ENCODE measurements at regions of chr22 and their contacts with region 1.

Region 1: GRCh38 chr22:29205594-29206371 is at the start of gene EMID1:
- DNase-seq: no peak
- H3K4me3 ChIP-seq: peak within 1 kb of the TSS; percentile 47
- CTCF ChIP-seq: peak; percentile 26

Region 2: DNA sequence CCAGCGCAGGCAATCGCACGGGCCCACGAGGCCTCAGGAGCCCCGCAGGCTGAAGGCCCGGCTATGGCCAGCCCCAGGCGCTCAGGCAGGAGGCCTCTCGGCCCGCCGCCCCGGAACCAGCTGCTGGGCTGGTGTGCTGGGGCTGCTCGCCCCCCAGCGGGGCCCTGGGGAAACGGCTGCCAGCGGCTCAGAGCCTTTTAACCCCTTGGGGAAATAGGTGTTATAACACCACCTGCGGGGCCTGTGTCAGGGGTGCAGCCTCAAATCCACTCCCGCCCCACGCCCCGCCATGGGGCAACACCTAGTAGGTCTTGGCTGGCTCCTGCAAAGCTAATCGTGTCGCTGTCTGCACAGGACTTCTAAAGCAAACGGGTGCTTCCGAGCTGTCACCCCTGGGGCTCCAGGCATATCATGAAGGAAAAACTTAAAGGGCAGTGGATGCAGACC is 763.5 kb before region 1 on chr22:
- in situ Hi-C with region 1: no loop called
- DNase-seq: peak; percentile 37
- H3K4me3 ChIP-seq: peak overlapping the region; percentile 52
- CTCF ChIP-seq: peak; percentile 72

Region 3: DNA sequence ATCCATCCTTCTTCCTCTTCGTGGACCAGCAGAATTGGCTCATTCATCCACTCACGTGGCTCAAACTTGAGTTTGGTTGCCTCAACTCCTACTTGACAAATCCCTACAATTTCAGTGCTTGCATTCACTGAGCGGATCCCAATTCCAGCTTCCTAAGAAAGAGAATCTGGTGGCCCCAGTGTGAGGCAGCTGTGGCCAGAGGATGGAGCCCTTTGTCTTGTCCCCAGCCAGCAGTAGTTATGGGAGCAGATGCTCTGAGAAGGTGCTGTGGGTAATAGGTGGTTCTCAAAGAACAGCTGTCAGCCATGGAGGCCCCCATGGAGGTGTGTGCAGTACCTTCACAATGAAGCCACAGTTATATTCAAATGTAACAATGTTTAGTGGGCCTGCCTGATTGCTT is 93.7 kb before region 1 on chr22:
- in situ Hi-C with region 1: loop called (anchors 5 kb)
- DNase-seq: no peak
- H3K4me3 ChIP-seq: no peak overlapping the region
- CTCF ChIP-seq: no peak